Activated B cell treated with CpG ODN at 0.5 μM for 24 hours (primary cell): ENCODE measurements at regions of chr6 and their contacts with region 1.

Region 1: GRCh38 chr6:137975188-137975940 is 108.3 kb downstream of the TNFAIP3 start:
- DNase-seq: no peak
- ATAC-seq: peak; percentile 40
- H3K4me3 Mint-ChIP-seq: peak overlapping the region; percentile 8
- H3K27ac Mint-ChIP-seq: peak overlapping the region; percentile 65
- H3K4me1 Mint-ChIP-seq: peaks cover 17% of the 10 kb centered on the region
- H3K27me3 Mint-ChIP-seq: no peaks in the 10 kb centered on the region
- CTCF ChIP-seq: no peak

Region 2: GRCh38 chr6:137341681-137342195 is 633.6 kb before region 1 on chr6:
- CTCF ChIA-PET with region 1: interaction called, 3 read pairs
- POLR2A ChIA-PET with region 1: no interaction called
- intact Hi-C with region 1: loop called (anchors 5 kb)
- DNase-seq: no peak
- ATAC-seq: no peak
- H3K4me3 Mint-ChIP-seq: no peak overlapping the region
- H3K27ac Mint-ChIP-seq: no peak overlapping the region
- H3K4me1 Mint-ChIP-seq: peaks cover 11% of the 10 kb centered on the region
- H3K27me3 Mint-ChIP-seq: peaks cover 5% of the 10 kb centered on the region
- CTCF ChIP-seq: no peak

Region 3: DNA sequence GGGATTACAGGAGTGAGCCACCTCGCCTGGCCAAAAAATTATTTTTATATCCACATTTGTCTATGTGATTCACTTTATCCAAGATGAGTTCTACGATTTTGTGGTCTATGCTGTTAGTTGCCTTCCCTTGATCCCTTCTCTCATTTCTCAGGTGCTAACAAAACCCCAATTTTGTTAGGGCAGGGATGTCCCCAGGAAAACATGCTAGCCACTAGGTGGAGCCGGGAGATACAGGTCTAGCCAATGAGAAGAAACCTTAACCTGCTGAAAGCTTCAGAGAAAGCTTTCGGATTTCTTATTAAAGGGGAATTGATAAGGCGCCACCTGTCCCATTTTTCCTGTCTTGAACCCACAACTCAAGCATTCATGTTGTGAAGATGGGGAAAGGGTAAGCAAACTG is 313.8 kb before region 1 on chr6:
- CTCF ChIA-PET with region 1: interaction called, 17 read pairs
- POLR2A ChIA-PET with region 1: no interaction called
- intact Hi-C with region 1: loop called (anchors 1 kb)
- DNase-seq: no peak
- ATAC-seq: peak; percentile 56
- H3K4me3 Mint-ChIP-seq: no peak overlapping the region
- H3K27ac Mint-ChIP-seq: no peak overlapping the region
- H3K4me1 Mint-ChIP-seq: no peaks in the 10 kb centered on the region
- H3K27me3 Mint-ChIP-seq: peaks cover 7% of the 10 kb centered on the region
- CTCF ChIP-seq: no peak

Region 4: DNA sequence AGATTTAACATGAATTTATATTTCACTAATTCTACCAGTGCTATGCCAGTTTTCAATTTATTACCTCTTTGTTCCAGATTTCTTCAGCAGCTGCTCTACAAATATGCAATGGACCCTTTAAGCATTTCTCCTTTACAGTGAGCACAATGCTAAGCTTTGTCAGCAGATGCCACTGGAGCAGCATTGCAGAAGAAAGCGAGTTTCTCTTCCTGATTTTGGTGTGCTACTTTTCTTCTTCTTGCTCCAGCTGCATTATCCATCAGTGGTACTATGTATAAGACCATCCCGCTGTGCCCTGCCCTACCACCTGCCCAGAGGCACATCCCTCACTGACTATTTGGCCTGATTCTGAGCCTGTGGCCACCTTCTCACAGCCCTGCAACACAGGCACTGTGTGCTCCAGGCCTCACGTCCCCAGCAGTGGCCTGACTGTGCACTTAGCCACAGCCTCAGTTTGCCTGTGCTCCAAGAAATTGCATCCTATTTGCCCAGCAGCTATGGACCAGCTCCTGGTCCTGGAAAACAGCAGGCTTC is 24.2 kb before region 1 on chr6:
- CTCF ChIA-PET with region 1: interaction called, 5 read pairs
- POLR2A ChIA-PET with region 1: no interaction called
- intact Hi-C with region 1: loop called (anchors 2 kb)
- DNase-seq: no peak
- ATAC-seq: peak; percentile 72
- H3K4me3 Mint-ChIP-seq: no peak overlapping the region
- H3K27ac Mint-ChIP-seq: peak overlapping the region; percentile 31
- H3K4me1 Mint-ChIP-seq: peaks cover 22% of the 10 kb centered on the region
- H3K27me3 Mint-ChIP-seq: no peaks in the 10 kb centered on the region
- CTCF ChIP-seq: no peak